Activated CD4-positive, alpha-beta memory T cell treated with anti-CD3 and anti-CD28 coated beads for 36 hours (primary cell): ENCODE measurements at regions of chr20 and their contacts with region 1.

Region 1: DNA sequence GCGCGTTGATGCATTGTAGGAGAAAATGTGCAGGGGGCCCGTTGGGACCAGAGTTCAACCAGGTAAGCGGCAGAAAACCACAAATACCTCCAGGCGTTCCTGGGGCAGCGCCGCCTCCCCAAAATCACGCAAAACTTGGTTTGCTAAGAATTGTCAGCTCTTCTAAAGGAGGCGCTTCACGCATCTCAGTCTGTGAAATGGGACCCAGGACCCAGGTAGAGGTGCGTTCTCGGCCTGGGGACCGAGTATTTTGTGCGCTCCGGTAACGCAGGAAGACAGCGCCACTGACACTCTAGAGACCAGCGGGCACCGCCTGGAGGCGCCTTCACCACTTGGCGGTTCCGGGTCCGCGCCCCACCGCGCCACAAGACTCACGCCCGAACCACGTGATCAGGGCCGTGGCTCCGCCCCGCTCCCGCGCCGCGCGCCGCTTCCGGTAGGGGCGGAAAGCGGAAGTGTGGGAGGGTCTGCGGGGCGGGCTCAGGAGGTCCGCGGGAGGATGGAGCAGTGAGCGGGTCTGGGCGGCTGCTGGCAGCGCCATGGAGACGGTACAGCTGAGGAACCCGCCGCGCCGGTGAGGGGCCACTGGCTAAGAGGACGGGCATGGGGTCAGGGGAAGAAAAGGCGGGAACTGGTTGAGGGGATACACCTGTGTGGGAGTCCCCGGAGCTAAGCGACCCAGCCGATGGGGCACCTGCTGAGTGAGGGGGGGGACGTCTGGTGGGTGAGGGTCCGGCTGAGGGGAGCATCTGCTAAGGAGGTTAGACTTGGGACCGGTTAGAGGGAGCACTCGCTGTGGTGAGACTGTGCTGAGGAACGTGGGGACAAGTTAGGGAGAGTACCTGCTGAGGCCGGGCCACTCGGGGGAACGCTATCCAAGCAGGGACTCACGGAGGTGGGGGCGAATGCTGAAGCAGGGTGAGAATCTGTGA is at the start of gene STK4:
- DNase-seq: peak; percentile 97
- H3K4me3 Mint-ChIP-seq: peak within 1 kb of the TSS; percentile 95
- H3K27ac Mint-ChIP-seq: peak within 1 kb of the TSS; percentile 99
- H3K4me1 Mint-ChIP-seq: peaks cover 58% of the 10 kb centered on the region
- H3K27me3 Mint-ChIP-seq: no peaks in the 10 kb centered on the region
- total RNA-seq, gene STK4: 126 to 128 TPM

Region 2: DNA sequence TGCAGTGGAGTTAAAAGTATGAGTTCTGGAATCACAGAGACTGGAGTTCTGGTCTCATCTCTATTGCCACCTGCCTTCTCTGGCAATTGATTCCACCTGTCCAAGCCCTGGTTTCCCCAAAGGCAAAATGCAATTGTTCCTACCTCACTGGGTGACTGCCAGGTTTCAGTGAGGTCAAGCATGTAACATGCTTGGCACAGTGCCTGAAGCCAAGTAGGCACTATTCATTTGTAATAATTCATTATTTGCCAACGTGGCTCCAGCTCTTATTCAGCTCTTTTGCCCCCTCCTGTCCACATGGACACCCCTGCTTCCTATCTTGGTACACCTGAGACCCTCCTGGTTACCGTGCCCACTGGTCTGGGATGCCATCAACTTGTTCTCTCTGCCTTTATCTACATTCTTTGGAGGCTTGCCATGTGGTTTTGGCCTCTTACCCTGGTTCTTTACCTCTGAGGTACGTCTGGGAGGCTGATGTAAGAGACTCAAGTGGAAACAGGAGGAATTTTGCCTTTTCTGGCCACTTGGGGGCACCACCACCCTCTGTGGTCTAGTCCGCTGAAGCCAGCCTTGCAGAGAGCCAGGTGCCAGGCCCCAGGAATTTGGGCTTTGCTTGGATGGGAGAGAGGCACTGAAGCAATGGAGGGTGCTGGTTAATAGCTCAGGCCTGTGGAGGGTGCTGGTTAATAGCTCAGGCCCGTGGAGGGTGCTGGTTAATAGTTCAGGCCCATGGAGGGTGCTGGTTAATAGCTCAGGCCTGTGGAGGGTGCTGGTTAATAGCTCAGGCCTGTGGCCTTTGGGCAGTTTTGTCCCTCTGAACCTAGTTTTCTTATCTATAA is 218.9 kb before region 1 on chr20:
- CTCF ChIA-PET with region 1: no interaction called
- POLR2A ChIA-PET with region 1: no interaction called
- intact Hi-C with region 1: loop called (anchors 5 kb)
- DNase-seq: peak; percentile 81
- H3K4me3 Mint-ChIP-seq: peak overlapping the region; percentile 67
- H3K27ac Mint-ChIP-seq: no peak overlapping the region
- H3K4me1 Mint-ChIP-seq: peaks cover 11% of the 10 kb centered on the region
- H3K27me3 Mint-ChIP-seq: peaks cover 18% of the 10 kb centered on the region

Region 3: DNA sequence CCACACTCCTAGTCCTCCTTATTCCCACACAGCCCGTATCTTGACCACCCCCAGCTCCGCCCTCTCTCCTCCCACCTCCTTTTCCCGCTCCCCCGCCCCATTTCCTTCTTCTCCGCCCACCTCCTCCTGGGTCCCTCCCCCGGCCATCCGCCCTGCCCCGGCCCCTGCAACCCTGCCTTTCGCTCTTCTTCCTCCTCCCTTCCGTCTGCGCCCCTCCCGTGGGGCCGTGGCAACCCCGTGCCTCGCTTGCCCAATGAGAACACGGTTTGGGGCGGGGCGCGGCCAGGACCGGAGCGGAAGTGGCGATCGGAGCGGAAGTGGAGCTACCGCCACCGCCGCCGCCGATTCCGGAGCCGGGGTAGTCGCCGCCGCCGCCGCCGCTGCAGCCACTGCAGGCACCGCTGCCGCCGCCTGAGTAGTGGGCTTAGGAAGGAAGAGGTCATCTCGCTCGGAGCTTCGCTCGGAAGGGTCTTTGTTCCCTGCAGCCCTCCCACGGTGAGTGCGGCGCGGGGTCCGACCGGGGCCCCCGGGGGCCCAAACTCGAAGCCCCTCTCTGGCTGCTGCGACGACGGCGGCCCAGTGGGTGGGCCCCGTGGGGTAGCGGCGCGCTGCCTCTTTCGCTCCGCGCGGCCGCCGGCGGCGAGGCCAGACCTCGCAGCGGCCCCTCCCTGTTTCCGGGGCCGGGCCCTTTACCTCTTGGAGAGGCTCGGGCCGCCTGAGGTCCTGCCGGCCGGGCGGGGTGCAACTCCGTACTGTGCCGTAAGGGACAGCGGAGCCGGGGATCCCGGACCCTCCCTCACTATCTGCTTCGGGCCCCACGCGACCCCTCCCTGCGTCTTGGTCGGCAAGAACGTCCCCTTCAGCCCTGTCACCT is 80.7 kb before region 1 on chr20 and contains the start of gene YWHAB:
- CTCF ChIA-PET with region 1: interaction called, 3 read pairs
- POLR2A ChIA-PET with region 1: no interaction called
- intact Hi-C with region 1: loop called (anchors 2 kb)
- DNase-seq: peak; percentile 99
- H3K4me3 Mint-ChIP-seq: peak within 1 kb of the TSS; percentile 85
- H3K27ac Mint-ChIP-seq: peak within 1 kb of the TSS; percentile 82
- H3K4me1 Mint-ChIP-seq: peaks cover 48% of the 10 kb centered on the region
- H3K27me3 Mint-ChIP-seq: no peaks in the 10 kb centered on the region
- total RNA-seq, gene YWHAB: 280 to 284 TPM

Region 4: DNA sequence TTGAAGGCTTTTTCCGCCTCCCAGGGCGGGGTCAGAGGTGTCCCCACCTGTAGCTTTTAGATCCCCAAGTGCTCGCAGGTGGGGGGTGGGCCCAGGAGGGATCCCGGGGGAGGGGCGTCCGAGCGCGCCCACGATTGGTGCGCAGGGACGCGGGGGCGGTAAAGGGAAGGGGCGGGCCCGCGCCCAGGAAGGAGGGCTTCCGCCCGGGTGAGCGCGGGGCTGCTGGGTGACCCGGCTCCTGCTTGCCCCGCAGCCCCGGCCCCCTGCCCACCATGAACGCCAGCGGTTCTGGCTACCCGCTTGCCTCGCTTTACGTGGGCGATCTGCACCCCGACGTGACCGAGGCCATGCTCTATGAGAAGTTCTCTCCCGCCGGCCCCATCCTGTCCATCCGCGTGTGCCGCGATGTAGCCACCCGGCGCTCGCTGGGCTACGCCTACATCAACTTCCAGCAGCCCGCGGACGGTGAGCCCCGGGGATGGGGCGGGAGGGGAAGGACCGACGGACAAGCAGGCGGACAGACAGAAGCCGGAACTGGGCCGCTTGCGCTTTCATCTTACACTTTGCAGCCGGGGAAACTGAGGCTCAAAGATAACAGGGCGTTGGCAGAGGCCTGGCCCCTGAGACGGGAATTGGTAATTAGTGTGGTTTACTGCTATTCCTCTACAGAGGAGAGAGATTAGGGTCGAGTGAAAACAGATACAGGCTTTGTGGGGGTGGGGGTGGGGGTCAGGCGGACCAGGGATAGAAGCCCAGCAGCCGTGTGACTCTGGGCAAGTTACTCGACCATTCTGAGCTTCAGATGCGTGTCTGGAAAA is 56.2 kb before region 1 on chr20 and contains the start of gene PABPC1L:
- CTCF ChIA-PET with region 1: no interaction called
- POLR2A ChIA-PET with region 1: interaction called, 3 read pairs
- intact Hi-C with region 1: loop called (anchors 2 kb)
- DNase-seq: peak; percentile 85
- H3K4me3 Mint-ChIP-seq: peak within 1 kb of the TSS; percentile 88
- H3K27ac Mint-ChIP-seq: peak within 1 kb of the TSS; percentile 60
- H3K4me1 Mint-ChIP-seq: peaks cover 38% of the 10 kb centered on the region
- H3K27me3 Mint-ChIP-seq: no peaks in the 10 kb centered on the region
- total RNA-seq, gene PABPC1L: 61.5 to 70.7 TPM

Region 5: DNA sequence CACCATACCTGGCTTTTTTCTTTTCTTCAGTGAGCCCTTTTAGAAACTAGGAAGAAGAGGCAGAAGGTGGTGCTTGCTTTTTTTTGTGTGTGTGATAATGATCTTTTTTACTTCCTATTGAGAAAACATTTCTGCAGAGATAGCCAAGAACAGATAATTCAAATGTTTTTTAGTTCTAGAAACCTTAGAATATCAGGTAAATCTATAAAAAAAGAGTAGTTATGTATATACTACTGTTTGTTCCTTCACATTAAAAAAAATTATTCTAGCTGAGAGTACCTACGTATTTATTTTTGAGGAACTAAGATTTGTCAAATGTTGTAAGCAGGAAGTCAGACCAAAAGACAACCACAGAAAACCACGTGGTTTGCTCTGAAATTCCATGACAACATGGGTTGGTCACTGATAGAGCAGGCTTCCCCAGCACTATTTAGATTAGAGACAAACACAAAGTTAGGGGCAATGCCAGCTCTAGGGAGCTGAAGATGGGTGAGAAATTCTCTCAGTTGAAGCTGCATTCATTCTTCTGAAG is 12.9 kb after region 1 on chr20:
- CTCF ChIA-PET with region 1: interaction called, 5 read pairs
- POLR2A ChIA-PET with region 1: interaction called, 11 read pairs
- intact Hi-C with region 1: loop called (anchors 1 kb)
- DNase-seq: peak; percentile 77
- H3K4me3 Mint-ChIP-seq: peak overlapping the region; percentile 50
- H3K27ac Mint-ChIP-seq: peak overlapping the region; percentile 88
- H3K4me1 Mint-ChIP-seq: peaks cover 79% of the 10 kb centered on the region
- H3K27me3 Mint-ChIP-seq: no peaks in the 10 kb centered on the region

Region 6: DNA sequence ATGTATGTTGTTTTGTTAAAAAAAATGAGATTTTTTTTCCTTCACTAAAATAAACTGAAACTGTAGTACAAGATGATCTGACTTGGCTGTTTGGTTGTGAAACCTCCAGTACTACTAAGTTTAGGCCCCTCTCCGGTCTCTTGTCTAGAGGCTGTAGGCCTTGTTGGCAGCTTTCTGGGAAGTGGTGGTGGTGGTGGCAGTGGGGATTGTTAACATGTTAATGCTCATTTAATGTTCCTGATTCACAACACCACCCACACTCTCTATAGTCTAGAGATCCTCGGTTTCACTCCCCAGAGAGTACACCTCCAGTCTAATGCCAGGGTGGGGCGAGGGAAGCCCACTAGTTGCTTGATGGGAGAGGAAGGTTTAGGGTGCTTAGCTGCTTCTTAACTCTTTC is 24.1 kb after region 1 on chr20:
- CTCF ChIA-PET with region 1: interaction called, 4 read pairs
- POLR2A ChIA-PET with region 1: interaction called, 6 read pairs
- intact Hi-C with region 1: loop called (anchors 1 kb)
- DNase-seq: peak; percentile 85
- H3K4me3 Mint-ChIP-seq: peak overlapping the region; percentile 74
- H3K27ac Mint-ChIP-seq: peak overlapping the region; percentile 96
- H3K4me1 Mint-ChIP-seq: peaks cover 72% of the 10 kb centered on the region
- H3K27me3 Mint-ChIP-seq: no peaks in the 10 kb centered on the region

Region 7: GRCh38 chr20:45028424-45029136 is 62.3 kb after region 1 on chr20:
- CTCF ChIA-PET with region 1: no interaction called
- POLR2A ChIA-PET with region 1: interaction called, 4 read pairs
- intact Hi-C with region 1: loop called (anchors 2 kb)
- DNase-seq: peak; percentile 42
- H3K4me3 Mint-ChIP-seq: no peak overlapping the region
- H3K27ac Mint-ChIP-seq: peak overlapping the region; percentile 78
- H3K4me1 Mint-ChIP-seq: peaks cover 72% of the 10 kb centered on the region
- H3K27me3 Mint-ChIP-seq: no peaks in the 10 kb centered on the region

Region 8: GRCh38 chr20:45070932-45071632 is 104.8 kb after region 1 on chr20:
- CTCF ChIA-PET with region 1: no interaction called
- POLR2A ChIA-PET with region 1: no interaction called
- intact Hi-C with region 1: no loop called
- DNase-seq: no peak
- H3K4me3 Mint-ChIP-seq: no peak overlapping the region
- H3K27ac Mint-ChIP-seq: no peak overlapping the region
- H3K4me1 Mint-ChIP-seq: peaks cover 60% of the 10 kb centered on the region
- H3K27me3 Mint-ChIP-seq: no peaks in the 10 kb centered on the region